IMR-90 (cell line): ENCODE measurements at regions of chr1 and their contacts with region 1.

Region 1: GRCh38 chr1:58584082-58584895 is 7.2 kb upstream of the TACSTD2 start:
- DNase-seq: peak; percentile 96
- ATAC-seq: peak; percentile 82
- H3K4me3 ChIP-seq: no peak overlapping the region
- H3K27ac ChIP-seq: peak overlapping the region; percentile 98
- H3K4me1 ChIP-seq: peaks cover 22% of the 10 kb centered on the region
- H3K27me3 ChIP-seq: no peaks in the 10 kb centered on the region
- CTCF ChIP-seq: no peak
- POLR2A ChIP-seq: no peak
- RAD21 ChIP-seq: no peak

Region 2: GRCh38 chr1:58618303-58618702 is 34.0 kb after region 1 on chr1:
- CTCF ChIA-PET with region 1: no interaction called
- POLR2A ChIA-PET with region 1: no interaction called
- dilution Hi-C with region 1: no loop called
- in situ Hi-C with region 1: no loop called
- intact Hi-C with region 1: loop called (anchors 1 kb)
- DNase-seq: peak; percentile 99
- ATAC-seq: peak; percentile 99
- H3K4me3 ChIP-seq: no peak overlapping the region
- H3K27ac ChIP-seq: no peak overlapping the region
- H3K4me1 ChIP-seq: peaks cover 4% of the 10 kb centered on the region
- H3K27me3 ChIP-seq: no peaks in the 10 kb centered on the region; the same call in 1 of the 2 replicates
- CTCF ChIP-seq: no peak
- POLR2A ChIP-seq: no peak
- RAD21 ChIP-seq: peak; percentile 18; the same call in 1 of the 2 replicates